K562 (cell line): ENCODE measurements at regions of chr18 and their contacts with region 1.

Region 1: GRCh38 chr18:67515945-67516538 is 478 bp downstream of the DSEL start:
- DNase-seq: peak; percentile 41 to 66 (median 48)
- ATAC-seq: peak; percentile 79
- H3K4me3 ChIP-seq: peak overlapping the region; percentile 45
- H3K27ac ChIP-seq: no peak overlapping the region
- H3K4me1 ChIP-seq: peaks cover 0 to 7% of the 10 kb centered on the region in 2 experiments; a peak in 3 of 5 replicates
- H3K27me3 ChIP-seq: no peaks in the 10 kb centered on the region
- CTCF ChIP-seq: peak; percentile 43 to 62 (median 56); a peak in 5 of 6 replicates
- EP300 ChIP-seq: no peak
- POLR2A ChIP-seq: no peak
- RAD21 ChIP-seq: peak; percentile 42 to 57

Region 2: DNA sequence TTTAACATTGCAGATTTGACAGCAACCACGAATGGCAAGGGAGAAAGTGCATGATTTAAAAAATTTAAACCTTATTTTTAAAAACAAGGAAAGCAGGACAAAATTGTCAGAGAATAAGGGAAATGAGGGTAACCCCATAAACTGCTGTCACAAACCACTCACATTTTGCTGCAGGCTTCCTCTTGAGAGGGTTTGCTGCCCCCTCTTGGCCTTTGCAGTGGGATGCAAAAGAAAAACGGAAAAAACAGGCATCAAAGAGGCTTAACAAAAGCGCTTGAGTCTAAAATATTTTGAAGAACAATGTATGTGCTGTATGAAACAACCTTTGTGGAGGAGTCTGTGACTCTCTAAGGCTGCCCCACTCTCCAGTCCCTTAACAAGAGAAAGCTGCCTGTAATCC is 1107.3 kb after region 1 on chr18:
- CTCF ChIA-PET with region 1: interaction called, 3 read pairs
- POLR2A ChIA-PET with region 1: no interaction called
- in situ Hi-C with region 1: no loop called
- intact Hi-C with region 1: loop called (anchors 10 kb)
- DNase-seq: peak; percentile 10 to 42 (median 12)
- ATAC-seq: peak; percentile 70
- H3K4me3 ChIP-seq: no peak overlapping the region
- H3K27ac ChIP-seq: no peak overlapping the region
- H3K4me1 ChIP-seq: no peaks in the 10 kb centered on the region
- H3K27me3 ChIP-seq: no peaks in the 10 kb centered on the region
- CTCF ChIP-seq: peak; percentile 18 to 37 (median 32); a peak in 3 of 6 replicates
- EP300 ChIP-seq: no peak
- POLR2A ChIP-seq: no peak
- RAD21 ChIP-seq: peak; percentile 38 to 51

Region 3: DNA sequence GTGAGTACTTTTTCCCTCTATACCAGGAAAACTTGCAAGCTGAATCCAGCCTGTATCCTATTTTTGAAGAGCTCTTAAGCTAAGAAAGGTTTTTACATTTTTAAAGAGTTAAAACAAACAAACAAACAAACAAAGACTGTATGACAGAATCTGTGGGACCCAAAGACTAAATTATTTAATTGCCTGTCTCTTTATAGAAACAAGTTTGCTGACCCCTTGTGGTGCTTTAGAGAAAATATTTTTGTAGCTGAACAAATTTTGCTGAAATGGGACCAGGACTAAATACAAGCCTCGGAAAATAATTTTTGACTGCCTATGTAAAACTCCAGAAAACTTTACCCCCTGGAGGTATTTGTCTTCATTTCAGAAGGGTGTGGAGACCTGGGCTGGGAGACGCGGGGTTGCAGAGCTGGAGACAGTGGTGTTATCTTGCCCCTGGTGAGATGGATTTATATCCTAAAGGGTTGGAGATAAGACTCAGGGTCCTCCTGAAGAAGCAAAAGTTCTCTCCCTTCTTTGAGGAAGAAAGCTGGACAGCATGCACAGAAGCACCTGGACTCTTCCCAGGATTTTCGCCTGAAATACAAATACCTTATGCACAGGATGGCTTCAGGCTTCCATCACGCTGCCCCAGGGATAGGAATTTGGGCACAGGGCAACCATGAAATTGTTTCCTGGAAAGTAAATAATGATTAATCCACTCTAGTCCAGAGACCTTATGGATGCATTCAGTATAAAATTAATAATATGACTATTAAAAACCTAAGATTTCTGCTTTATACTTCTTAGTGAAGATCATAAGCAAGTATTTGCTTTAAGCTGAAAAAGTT is 1144.5 kb after region 1 on chr18:
- CTCF ChIA-PET with region 1: no interaction called
- POLR2A ChIA-PET with region 1: no interaction called
- in situ Hi-C with region 1: no loop called
- intact Hi-C with region 1: loop called (anchors 10 kb)
- DNase-seq: peak; percentile 8 to 33 (median 8)
- ATAC-seq: no peak
- H3K4me3 ChIP-seq: no peak overlapping the region
- H3K27ac ChIP-seq: no peak overlapping the region
- H3K4me1 ChIP-seq: no peaks in the 10 kb centered on the region
- H3K27me3 ChIP-seq: no peaks in the 10 kb centered on the region
- CTCF ChIP-seq: peak; percentile 16 to 51 (median 18); a peak in 3 of 6 replicates
- EP300 ChIP-seq: no peak
- POLR2A ChIP-seq: no peak
- RAD21 ChIP-seq: peak; percentile 17 to 44; a peak in 2 of 4 replicates

Region 4: GRCh38 chr18:68735483-68736343 is 1219.7 kb after region 1 on chr18:
- CTCF ChIA-PET with region 1: no interaction called
- POLR2A ChIA-PET with region 1: no interaction called
- in situ Hi-C with region 1: no loop called
- intact Hi-C with region 1: loop called (anchors 10 kb)
- DNase-seq: peak; percentile 14 to 31 (median 21)
- ATAC-seq: peak; percentile 53; the same call in 1 of the 3 replicates
- H3K4me3 ChIP-seq: no peak overlapping the region
- H3K27ac ChIP-seq: no peak overlapping the region
- H3K4me1 ChIP-seq: no peaks in the 10 kb centered on the region
- H3K27me3 ChIP-seq: no peaks in the 10 kb centered on the region
- CTCF ChIP-seq: peak; percentile 32 to 48 (median 47); a peak in 5 of 6 replicates
- EP300 ChIP-seq: no peak
- POLR2A ChIP-seq: no peak
- RAD21 ChIP-seq: peak; percentile 45 to 63